AG04450 (cell line): ENCODE measurements at regions of chr18 and their contacts with region 1.

Region 1: GRCh38 chr18:61581578-61582201 is 248.5 kb downstream of the CDH20 start:
- DNase-seq: no peak
- H3K4me3 ChIP-seq: peak overlapping the region; percentile 55
- H3K27ac ChIP-seq: peak overlapping the region; percentile 24
- H3K27me3 ChIP-seq: no peaks in the 10 kb centered on the region
- CTCF ChIP-seq: peak; percentile 94

Region 2: GRCh38 chr18:61435064-61435652 is 146.5 kb before region 1 on chr18:
- CTCF ChIA-PET with region 1: no interaction called
- POLR2A ChIA-PET with region 1: no interaction called
- DNase-seq: no peak
- H3K4me3 ChIP-seq: no peak overlapping the region
- H3K27ac ChIP-seq: no peak overlapping the region
- H3K27me3 ChIP-seq: no peaks in the 10 kb centered on the region
- CTCF ChIP-seq: peak; percentile 62

Region 3: GRCh38 chr18:61551586-61551985 is 30.1 kb before region 1 on chr18:
- CTCF ChIA-PET with region 1: interaction called, 23 read pairs
- POLR2A ChIA-PET with region 1: interaction called, 3 read pairs
- DNase-seq: peak; percentile 82
- H3K4me3 ChIP-seq: no peak overlapping the region
- H3K27ac ChIP-seq: no peak overlapping the region
- H3K27me3 ChIP-seq: no peaks in the 10 kb centered on the region
- CTCF ChIP-seq: peak; percentile 97

Region 4: GRCh38 chr18:61596296-61596695 is 14.6 kb after region 1 on chr18:
- CTCF ChIA-PET with region 1: interaction called, 81 read pairs
- POLR2A ChIA-PET with region 1: no interaction called
- DNase-seq: no peak
- H3K4me3 ChIP-seq: no peak overlapping the region
- H3K27ac ChIP-seq: no peak overlapping the region
- H3K27me3 ChIP-seq: no peaks in the 10 kb centered on the region
- CTCF ChIP-seq: no peak

Region 5: DNA sequence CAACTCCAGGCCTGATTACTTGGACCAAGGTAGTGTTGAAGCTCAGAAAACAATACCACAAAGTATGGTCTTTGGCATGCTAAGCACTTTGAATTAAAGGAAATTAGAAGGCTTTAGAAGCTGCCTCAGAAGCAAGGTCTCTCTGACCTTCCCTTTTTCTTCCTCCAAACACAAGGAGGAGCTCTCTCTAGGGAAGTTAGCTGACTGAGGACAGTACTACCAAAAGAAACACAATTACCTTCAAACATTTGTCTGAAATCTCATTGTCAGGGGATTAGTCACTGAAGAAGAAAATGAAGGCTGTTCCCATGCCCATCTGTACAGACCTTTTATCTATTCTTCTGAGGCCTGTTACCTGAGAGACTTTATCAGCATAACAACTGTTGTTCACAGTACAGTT is 30.8 kb after region 1 on chr18:
- CTCF ChIA-PET with region 1: interaction called, 62 read pairs
- POLR2A ChIA-PET with region 1: no interaction called
- DNase-seq: no peak
- H3K4me3 ChIP-seq: no peak overlapping the region
- H3K27ac ChIP-seq: no peak overlapping the region
- H3K27me3 ChIP-seq: no peaks in the 10 kb centered on the region
- CTCF ChIP-seq: peak; percentile 34

Region 6: GRCh38 chr18:61703508-61703907 is 121.8 kb after region 1 on chr18:
- CTCF ChIA-PET with region 1: no interaction called
- POLR2A ChIA-PET with region 1: no interaction called
- DNase-seq: peak; percentile 83
- H3K4me3 ChIP-seq: no peak overlapping the region
- H3K27ac ChIP-seq: peak overlapping the region; percentile 76
- H3K27me3 ChIP-seq: no peaks in the 10 kb centered on the region
- CTCF ChIP-seq: no peak

Region 7: DNA sequence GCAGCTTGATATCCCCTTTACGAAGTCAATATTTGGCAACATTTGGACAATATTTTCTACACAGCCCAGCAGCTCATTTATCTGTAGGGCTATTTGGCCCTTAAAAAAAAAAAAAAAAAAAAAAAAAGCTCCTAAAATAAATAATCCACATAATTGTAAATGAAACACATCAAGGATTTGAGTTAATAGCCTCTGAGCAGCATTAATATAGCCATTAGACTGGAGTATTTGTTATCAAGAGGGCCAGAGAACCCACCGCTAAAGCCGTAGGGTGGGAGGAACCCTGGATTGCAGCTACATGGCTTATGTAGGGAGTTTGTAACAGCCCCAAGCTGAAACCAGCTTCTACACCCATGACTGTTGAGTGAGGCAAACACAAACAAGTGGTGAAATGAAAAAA is 226.6 kb after region 1 on chr18:
- CTCF ChIA-PET with region 1: interaction called, 17 read pairs
- POLR2A ChIA-PET with region 1: no interaction called
- DNase-seq: no peak
- H3K4me3 ChIP-seq: no peak overlapping the region
- H3K27ac ChIP-seq: no peak overlapping the region
- H3K27me3 ChIP-seq: no peaks in the 10 kb centered on the region
- CTCF ChIP-seq: no peak

Region 8: GRCh38 chr18:61901323-61901986 is 319.8 kb after region 1 on chr18:
- CTCF ChIA-PET with region 1: interaction called, 33 read pairs
- POLR2A ChIA-PET with region 1: no interaction called
- DNase-seq: no peak
- H3K4me3 ChIP-seq: no peak overlapping the region
- H3K27ac ChIP-seq: no peak overlapping the region
- H3K27me3 ChIP-seq: no peaks in the 10 kb centered on the region
- CTCF ChIP-seq: peak; percentile 98

Region 9: DNA sequence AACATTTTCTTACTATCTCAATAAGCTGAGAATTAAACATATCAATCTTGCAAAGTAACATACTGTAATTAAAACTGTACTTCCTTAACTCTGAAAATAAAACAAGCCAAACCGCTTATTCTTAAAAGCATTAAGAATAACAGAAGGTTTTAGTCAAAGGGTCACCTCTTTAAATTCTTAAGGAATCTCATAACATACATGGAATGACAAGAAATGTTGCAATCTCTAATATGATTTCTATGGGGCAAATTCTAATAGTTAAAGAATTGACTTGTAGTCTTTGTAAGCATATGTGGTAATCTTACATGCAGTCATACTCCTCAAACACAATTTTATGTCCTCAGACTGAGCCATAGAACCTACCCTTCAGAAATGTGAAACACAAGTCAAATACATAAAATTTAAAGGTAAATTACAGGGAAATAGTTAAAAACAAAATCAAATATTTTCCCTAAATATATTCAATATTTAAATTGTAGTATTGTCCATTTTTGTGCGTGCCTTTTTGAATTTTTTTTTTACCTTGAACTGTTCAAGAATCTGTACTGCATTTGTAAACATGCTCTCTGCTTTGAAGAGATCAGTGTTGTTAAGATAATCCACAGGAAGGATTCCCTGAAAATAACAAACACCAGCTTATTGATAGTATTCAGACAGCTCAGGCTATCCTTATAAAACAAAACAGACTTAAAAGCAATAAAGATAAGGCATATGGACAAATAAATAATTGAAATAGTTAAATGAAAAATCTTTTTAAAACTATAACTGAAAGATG is 557.0 kb after region 1 on chr18:
- CTCF ChIA-PET with region 1: interaction called, 15 read pairs
- POLR2A ChIA-PET with region 1: no interaction called
- DNase-seq: no peak
- H3K4me3 ChIP-seq: no peak overlapping the region
- H3K27ac ChIP-seq: no peak overlapping the region
- H3K27me3 ChIP-seq: no peaks in the 10 kb centered on the region
- CTCF ChIP-seq: no peak